ENCODE measurements at regions of chr1 and their contacts with region 1.

Region 1: GRCh38 chr1:154335025-154335714 is 9.8 kb downstream of the ATP8B2 start:
- DNase-seq: peak; percentile 94
- H3K4me3 Mint-ChIP-seq: no peak overlapping the region
- H3K27ac Mint-ChIP-seq: no peak overlapping the region
- H3K4me1 Mint-ChIP-seq: peaks cover 5% of the 10 kb centered on the region
- H3K27me3 Mint-ChIP-seq: no peaks in the 10 kb centered on the region
- CTCF ChIP-seq: peak; percentile 87

Region 2: DNA sequence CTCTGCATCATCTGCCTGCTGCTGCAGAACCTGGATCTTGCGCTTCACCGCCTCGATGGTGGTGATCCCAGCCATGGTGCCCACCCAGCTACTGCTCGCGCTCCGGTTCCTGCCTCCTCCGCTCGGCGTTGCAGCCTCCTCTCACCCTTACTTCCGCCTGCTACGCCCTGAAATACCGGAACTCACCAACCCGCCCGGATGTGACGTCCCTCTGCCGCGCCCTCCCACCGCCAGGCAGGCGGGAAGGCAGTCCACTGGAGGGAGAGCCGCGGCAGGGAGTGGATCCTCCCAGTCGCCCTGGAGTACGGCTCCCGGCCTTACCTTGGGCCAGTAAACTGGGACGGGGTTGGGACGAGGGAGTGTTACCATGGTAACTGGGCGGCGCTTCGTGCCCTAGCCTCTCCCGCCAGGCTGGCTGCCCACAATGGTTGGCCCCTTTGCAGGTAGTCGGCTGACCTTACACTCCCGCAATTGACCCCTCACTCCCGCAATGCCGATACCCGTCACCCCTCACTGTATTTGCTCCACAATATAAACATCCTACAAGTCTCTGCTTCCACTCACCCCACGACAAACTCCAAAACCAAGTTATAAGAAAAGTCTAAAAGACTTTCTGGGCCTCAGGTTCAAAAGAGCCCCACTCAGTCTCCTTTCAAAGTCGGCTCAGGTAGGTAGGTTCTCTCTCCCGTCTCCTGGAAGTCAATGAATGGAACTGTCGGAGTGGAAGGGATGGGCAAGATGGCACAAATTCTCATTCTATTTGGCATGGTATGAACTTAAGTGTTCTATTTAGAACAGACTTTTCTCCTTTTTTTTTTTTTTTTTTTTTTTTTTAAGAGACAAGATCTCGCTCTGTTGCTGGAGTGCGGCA is 151.9 kb before region 1 on chr1:
- CTCF ChIA-PET with region 1: interaction called, 5 read pairs
- POLR2A ChIA-PET with region 1: no interaction called
- intact Hi-C with region 1: loop called (anchors 1 kb)
- DNase-seq: peak; percentile 99
- H3K4me3 Mint-ChIP-seq: peak overlapping the region; percentile 92
- H3K27ac Mint-ChIP-seq: peak overlapping the region; percentile 96
- H3K4me1 Mint-ChIP-seq: peaks cover 27% of the 10 kb centered on the region
- H3K27me3 Mint-ChIP-seq: no peaks in the 10 kb centered on the region
- CTCF ChIP-seq: no peak

Region 3: DNA sequence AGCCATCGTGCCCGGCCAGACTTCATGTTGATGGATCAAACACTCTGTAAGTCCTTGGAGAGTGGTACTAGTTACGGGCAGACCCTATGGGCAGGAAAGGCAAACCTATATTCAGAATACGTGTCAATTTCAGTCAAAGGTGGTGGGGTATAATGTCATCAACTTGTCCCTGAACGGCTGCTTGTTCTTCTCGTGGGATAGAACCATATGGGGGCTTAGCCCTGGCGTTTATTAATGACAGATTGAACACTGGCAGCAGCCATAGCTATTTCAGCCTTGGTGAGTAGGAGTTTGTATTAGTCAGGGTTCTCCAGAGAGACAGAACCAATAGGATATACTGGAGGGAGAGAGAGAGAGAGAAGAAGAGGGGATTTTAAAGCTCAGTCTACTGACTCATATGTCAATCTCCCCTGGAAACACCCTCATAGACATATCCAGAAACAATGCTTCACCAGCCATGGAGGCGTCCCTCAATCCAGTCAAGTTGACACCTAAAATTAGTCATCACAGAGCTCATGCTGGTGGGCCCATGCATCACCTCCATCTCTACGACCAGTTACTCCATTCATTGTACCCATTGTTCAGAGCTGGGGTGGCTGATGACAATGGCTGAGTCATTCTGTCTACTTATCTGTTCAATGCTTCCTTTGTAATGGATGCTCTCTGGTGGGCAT is 30.4 kb before region 1 on chr1:
- CTCF ChIA-PET with region 1: interaction called, 13 read pairs
- POLR2A ChIA-PET with region 1: no interaction called
- intact Hi-C with region 1: no loop called
- DNase-seq: no peak
- H3K4me3 Mint-ChIP-seq: no peak overlapping the region
- H3K27ac Mint-ChIP-seq: no peak overlapping the region
- H3K4me1 Mint-ChIP-seq: no peaks in the 10 kb centered on the region
- H3K27me3 Mint-ChIP-seq: no peaks in the 10 kb centered on the region
- CTCF ChIP-seq: no peak

Region 4: GRCh38 chr1:154324669-154325582 is 10.2 kb before region 1 on chr1 and contains the start of gene ATP8B2:
- CTCF ChIA-PET with region 1: interaction called, 82 read pairs
- POLR2A ChIA-PET with region 1: interaction called, 4 read pairs
- intact Hi-C with region 1: loop called (anchors 1 kb)
- DNase-seq: peak; percentile 85
- H3K4me3 Mint-ChIP-seq: peak within 1 kb of the TSS; percentile 76
- H3K27ac Mint-ChIP-seq: peak within 1 kb of the TSS; percentile 77
- H3K4me1 Mint-ChIP-seq: peaks cover 31% of the 10 kb centered on the region
- H3K27me3 Mint-ChIP-seq: no peaks in the 10 kb centered on the region
- CTCF ChIP-seq: peak; percentile 99
- total RNA-seq, gene ATP8B2: 27.1 and 66.3 TPM in 2 replicates

Region 5: GRCh38 chr1:154344977-154345837 is 10.0 kb after region 1 on chr1:
- CTCF ChIA-PET with region 1: interaction called, 63 read pairs
- POLR2A ChIA-PET with region 1: interaction called, 3 read pairs
- intact Hi-C with region 1: no loop called
- DNase-seq: peak; percentile 66
- H3K4me3 Mint-ChIP-seq: no peak overlapping the region
- H3K27ac Mint-ChIP-seq: no peak overlapping the region
- H3K4me1 Mint-ChIP-seq: peaks cover 6% of the 10 kb centered on the region
- H3K27me3 Mint-ChIP-seq: no peaks in the 10 kb centered on the region
- CTCF ChIP-seq: peak; percentile 86

Region 6: DNA sequence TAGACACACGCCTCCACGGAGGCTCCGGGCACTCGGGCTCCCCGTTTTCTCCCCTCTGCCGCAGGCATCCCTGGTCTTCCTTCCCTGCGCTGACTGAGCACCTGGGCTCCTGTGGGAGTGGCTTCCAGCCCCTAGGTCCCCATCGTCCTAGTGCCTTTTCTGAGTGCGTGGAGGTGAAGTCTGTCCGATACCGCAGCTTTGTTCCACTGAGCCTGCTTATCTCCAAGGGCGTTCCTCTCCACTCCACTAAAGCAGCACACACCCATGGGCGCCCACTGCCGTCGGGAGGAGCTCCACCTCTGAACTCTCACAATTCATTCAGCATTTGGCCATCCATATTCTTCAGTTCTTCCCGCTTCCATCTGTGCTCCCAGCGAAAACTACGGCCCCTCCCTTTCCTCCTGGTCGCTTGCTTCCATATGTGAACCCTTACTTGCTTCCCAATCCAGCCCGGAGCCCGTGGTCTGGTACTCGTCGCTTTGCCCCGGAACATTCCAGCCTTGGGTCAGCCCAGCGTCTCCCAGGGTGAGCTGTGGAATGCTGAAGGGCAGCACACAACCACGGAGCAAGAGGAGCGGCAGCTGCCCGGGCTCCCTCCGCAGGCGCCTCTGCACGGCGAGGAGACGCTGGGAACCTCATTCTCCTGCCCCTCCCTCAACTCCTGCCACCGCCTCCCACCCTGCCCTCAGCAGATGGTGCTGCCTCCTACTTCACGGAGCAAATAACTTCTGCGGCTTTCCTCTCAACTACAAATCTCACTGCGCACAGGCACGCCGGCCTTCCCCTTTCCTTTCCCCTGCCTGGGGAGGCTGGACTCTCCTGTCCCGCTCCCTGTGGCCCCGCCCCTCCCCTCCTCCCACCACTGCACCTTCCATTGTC is 17.6 kb after region 1 on chr1:
- CTCF ChIA-PET with region 1: interaction called, 63 read pairs
- POLR2A ChIA-PET with region 1: interaction called, 4 read pairs
- intact Hi-C with region 1: no loop called
- DNase-seq: no peak
- H3K4me3 Mint-ChIP-seq: peak overlapping the region; percentile 12
- H3K27ac Mint-ChIP-seq: no peak overlapping the region
- H3K4me1 Mint-ChIP-seq: peaks cover 19% of the 10 kb centered on the region
- H3K27me3 Mint-ChIP-seq: peaks cover 13% of the 10 kb centered on the region
- CTCF ChIP-seq: no peak

Region 7: DNA sequence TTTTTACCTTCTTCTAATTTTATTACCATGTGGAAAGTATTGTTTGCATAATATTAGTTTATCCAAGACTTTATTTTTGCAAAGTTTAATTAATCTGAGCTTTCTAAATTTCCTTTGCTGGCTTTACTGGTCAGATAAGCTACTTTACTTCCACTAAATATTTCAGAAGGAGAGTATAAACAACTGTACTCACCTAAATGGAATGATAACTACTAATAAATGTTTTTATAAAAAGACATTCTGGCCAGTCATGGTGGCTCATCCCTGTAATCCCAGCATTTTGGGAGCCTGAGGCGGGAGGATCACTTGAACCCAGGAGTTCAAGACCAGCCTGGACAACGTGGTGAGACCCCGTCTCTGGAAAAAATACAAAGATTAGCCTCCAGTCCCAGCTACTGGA is 26.2 kb after region 1 on chr1:
- CTCF ChIA-PET with region 1: interaction called, 12 read pairs
- POLR2A ChIA-PET with region 1: interaction called, 4 read pairs
- intact Hi-C with region 1: no loop called
- DNase-seq: no peak
- H3K4me3 Mint-ChIP-seq: no peak overlapping the region
- H3K27ac Mint-ChIP-seq: no peak overlapping the region
- H3K4me1 Mint-ChIP-seq: no peaks in the 10 kb centered on the region
- H3K27me3 Mint-ChIP-seq: no peaks in the 10 kb centered on the region
- CTCF ChIP-seq: no peak